ENCODE measurements at regions of chr5 and their contacts with region 1.

Region 1: GRCh38 chr5:157801-158200 is 33.5 kb upstream of the LRRC14B start:
- DNase-seq: no peak
- H3K4me3 ChIP-seq: no peak overlapping the region
- H3K27ac ChIP-seq: no peak overlapping the region
- H3K4me1 ChIP-seq: no peaks in the 10 kb centered on the region
- H3K27me3 ChIP-seq: no peaks in the 10 kb centered on the region
- CTCF ChIP-seq: no peak
- POLR2A ChIP-seq: no peak

Region 2: DNA sequence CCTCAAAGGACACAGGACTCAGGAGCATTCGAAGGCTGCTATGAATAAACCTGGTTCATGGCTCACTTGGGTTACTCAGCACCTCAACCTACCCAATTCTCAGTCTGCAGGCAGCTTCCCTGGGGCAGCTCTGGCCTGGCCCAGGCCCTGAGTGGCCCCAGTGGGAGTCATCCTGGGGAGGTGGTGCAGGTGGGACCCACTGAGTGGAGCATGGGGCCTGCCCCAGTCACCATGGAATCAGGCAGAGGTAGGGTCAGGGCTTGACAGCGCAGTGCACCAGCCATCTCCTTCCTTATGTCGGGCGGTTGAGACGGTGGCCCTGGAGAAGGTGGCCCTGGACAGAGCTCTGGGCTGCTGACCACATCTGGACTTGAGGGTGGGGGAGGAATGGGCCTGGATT is 46.6 kb before region 1 on chr5:
- intact Hi-C with region 1: no loop called
- DNase-seq: no peak
- H3K4me3 ChIP-seq: no peak overlapping the region
- H3K27ac ChIP-seq: no peak overlapping the region
- H3K4me1 ChIP-seq: no peaks in the 10 kb centered on the region
- H3K27me3 ChIP-seq: no peaks in the 10 kb centered on the region
- CTCF ChIP-seq: no peak
- POLR2A ChIP-seq: no peak

Region 3: DNA sequence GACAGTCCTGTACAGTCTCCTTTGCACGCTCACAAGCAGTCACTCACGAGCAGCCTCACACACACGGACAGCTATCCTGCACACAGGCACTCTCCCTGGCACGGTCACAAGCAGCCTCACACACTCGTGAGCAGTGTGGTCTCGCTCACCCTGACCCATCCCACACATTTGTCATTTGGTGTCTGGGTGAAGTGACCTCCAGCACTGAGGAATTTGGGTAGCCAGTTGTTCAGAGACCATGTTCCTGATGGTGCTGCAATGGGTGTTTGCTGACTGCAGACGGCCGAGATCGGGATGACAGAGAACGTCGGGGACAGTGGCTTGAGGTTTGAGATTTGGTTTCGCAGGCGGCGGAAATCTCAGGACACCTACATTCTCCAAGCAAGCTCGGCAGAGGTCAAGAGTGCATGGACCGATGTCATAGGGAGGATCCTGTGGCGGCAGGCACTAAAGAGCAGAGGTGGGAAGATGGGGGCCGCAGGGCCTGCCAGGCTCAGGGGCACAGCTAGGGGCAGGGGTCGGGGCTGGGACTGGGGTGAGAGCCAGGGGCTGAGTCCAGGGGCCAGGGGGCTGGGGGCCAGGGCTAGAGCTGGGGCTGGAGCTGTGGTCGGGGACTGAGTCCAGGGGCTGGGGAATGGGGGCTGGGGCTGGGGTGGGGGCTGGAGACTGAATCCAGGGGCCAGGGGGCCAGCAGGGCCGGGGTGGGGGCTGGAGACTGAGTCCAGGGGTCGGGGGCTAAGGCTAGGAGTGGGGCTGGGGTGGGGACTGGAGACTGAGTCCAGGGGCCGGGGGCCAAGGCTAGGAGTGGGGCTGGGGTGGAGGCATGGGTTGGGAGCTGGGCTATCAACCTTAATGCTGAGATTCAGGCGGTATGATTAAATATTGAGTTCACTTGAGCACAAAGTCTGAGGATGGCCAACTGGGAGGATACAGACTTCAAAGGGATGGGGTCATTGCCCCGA is 16.1 kb after region 1 on chr5:
- intact Hi-C with region 1: loop called (anchors 1 kb)
- DNase-seq: peak in 1 of 2 donors; percentile 6
- H3K4me3 ChIP-seq: no peak overlapping the region
- H3K27ac ChIP-seq: no peak overlapping the region
- H3K4me1 ChIP-seq: no peaks in the 10 kb centered on the region
- H3K27me3 ChIP-seq: no peaks in the 10 kb centered on the region
- CTCF ChIP-seq: no peak
- POLR2A ChIP-seq: no peak

Measured in breast epithelium (tissue), 4 donors.